AG04449 (cell line): ENCODE measurements at regions of chr3 and their contacts with region 1.

Region 1: DNA sequence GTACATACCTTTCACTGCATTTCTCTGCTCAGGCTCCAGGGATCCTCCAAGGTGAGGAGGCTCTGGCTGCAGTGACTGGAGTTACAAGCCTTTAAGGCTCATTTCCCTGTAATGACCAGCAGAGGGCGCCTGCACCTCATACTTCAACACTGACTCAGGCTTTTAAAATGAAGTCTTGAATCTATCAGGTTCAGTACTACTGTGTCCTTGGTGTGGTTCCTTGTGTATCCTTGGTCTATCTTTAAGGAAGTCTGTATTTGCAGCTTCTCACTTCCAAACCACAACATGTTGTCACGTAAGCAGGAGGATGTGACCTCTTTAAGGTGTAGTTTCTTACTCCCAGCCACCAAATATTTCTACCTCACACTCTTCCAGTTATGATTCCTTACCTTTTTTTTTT is 122.5 kb upstream of the ZBED2 start:
- DNase-seq: peak; percentile 57
- H3K4me3 ChIP-seq: no peak overlapping the region
- CTCF ChIP-seq: peak; percentile 80

Region 2: DNA sequence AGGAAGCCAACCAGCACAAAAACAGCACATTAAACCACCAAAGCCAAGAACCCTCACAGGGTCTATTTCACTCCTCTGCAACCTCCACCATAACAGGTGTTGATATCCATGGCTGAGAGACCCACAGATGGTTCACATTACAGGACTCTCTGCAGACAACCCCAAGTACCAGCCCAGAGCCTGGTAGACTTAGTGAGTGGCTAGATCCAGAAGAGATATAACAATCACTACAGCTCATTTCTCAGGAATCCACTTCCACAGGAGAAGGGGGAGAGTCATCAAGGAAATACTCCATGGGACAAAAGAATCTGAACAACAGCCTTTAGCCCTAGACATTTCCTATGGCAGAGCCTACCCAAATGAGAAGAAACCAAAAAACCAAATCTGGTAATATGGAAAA is 343.7 kb before region 1 on chr3:
- CTCF ChIA-PET with region 1: no interaction called
- POLR2A ChIA-PET with region 1: no interaction called
- DNase-seq: no peak
- H3K4me3 ChIP-seq: no peak overlapping the region
- CTCF ChIP-seq: no peak

Region 3: GRCh38 chr3:111577794-111578685 is 139.6 kb before region 1 on chr3:
- CTCF ChIA-PET with region 1: interaction called, 141 read pairs
- POLR2A ChIA-PET with region 1: no interaction called
- DNase-seq: peak; percentile 70
- H3K4me3 ChIP-seq: no peak overlapping the region
- CTCF ChIP-seq: peak; percentile 71

Region 4: DNA sequence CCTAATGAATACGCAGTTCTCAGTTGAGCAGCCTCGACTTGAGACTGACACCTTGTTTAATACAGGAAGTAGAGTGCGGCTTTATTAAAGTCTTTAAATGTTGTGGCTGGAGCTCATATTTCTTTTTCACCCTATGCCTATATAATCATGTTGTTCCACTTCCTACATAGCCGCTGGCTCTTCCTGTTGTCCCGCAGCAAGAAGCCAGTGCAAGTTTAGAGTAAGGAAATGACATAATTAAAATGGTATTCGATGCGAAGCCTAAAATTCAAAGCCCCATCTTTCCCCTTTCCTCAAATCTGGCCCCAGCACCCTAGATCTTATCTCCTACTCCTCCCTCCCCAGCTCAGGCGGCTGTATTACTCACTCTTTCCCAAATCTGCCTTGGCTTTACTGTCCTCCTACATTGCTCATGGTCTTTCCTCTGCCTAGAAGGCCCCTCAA is 133.9 kb after region 1 on chr3:
- CTCF ChIA-PET with region 1: interaction called, 408 read pairs
- POLR2A ChIA-PET with region 1: no interaction called
- DNase-seq: no peak
- H3K4me3 ChIP-seq: no peak overlapping the region
- CTCF ChIP-seq: no peak

Region 5: DNA sequence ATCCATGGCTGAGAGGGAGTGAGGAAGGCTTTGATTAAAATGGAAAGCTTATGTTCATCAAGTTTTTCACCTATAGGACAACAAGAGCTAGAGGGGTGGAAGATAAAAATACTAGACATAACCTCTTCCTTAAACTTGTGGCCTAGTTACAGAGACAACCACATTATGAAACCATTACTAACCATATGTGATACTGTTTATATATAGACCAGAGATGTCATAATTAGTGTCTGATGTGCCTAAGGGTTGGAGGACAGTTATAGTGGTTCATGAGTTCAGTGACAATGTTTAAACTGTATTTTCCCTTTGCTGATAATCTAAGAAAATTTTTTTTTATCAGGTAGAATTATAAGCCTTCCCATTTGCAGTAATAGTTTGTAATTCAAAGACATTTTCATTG is 165.2 kb after region 1 on chr3:
- CTCF ChIA-PET with region 1: interaction called, 74 read pairs
- POLR2A ChIA-PET with region 1: no interaction called
- DNase-seq: no peak
- H3K4me3 ChIP-seq: no peak overlapping the region
- CTCF ChIP-seq: no peak

Region 6: DNA sequence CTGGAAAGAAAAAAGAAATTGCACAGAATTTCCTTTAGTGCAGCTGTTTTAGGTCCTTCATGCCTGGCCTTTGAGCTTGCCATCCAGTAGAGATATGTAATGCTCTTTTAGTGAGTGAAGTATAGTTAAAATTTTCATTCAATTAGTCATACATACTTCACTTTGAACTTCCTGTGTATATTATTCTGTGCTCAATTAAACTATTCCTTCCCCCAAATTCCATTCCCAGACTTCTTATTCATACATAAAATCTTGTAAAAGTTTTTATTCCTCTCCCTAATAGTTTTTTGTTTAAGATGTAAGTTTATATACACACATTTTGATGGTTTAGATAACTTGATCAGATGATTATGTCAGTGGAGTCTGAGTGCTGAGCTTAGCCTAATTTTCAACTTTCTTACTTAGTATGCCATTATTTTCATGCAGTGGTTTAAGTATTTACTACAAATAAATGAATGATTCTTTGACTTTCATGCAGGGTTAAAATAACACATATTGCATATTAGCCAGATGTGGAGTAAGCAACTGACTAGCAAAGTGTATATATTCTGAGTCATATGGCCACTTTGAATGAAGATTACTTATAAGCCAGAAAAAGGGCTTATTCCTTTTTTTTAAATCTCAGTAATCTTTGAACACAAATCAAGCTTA is 218.7 kb after region 1 on chr3:
- CTCF ChIA-PET with region 1: interaction called, 72 read pairs
- POLR2A ChIA-PET with region 1: no interaction called
- DNase-seq: peak; percentile 73
- H3K4me3 ChIP-seq: no peak overlapping the region
- CTCF ChIP-seq: no peak

Region 7: DNA sequence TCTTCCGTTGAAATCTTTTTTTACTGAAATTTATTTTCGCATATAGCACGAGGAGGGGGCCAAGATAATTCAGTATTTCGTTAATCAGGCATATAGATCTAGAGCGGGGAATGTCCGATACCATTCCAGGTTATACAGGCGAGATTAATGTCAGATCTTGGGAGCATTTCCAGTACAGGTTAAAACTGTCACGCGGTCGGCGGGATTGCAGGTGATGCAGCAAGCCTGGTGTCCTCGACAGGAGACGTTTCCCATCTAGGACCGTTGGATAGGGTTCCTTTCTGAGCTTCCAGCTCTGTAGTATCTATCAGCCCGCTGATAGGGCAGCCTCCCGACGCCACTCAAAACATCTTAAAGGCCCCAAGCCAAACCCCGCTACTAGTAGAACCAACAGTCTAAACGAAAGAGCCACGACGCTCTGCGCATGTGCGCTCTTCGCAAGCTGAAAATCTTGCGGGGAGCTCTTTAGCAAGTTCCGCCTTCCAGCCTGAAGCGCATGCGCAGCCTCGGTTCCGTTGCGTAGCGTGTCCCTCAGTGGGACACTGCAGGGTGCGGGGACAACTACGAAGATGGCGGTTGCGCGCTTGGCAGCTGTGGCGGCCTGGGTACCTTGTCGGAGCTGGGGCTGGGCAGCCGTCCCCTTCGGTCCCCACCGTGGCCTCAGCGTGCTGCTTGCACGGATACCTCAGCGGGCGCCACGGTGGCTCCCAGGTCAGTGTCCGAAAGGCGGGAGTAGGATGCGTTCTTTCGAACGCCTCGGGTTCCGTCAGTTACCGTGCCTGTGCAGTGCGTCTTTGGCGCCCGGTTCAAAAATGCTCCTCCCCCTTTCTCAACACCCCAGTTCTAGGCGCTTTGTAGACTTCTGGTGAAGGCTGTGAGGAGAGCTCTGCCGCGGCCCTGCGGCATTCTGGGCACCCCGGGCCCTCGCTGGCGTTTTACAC is 261.2 kb after region 1 on chr3 and contains the start of gene ABHD10:
- CTCF ChIA-PET with region 1: interaction called, 324 read pairs
- POLR2A ChIA-PET with region 1: no interaction called
- DNase-seq: peak; percentile 84
- H3K4me3 ChIP-seq: peak within 1 kb of the TSS; percentile 89
- CTCF ChIP-seq: no peak

Region 8: DNA sequence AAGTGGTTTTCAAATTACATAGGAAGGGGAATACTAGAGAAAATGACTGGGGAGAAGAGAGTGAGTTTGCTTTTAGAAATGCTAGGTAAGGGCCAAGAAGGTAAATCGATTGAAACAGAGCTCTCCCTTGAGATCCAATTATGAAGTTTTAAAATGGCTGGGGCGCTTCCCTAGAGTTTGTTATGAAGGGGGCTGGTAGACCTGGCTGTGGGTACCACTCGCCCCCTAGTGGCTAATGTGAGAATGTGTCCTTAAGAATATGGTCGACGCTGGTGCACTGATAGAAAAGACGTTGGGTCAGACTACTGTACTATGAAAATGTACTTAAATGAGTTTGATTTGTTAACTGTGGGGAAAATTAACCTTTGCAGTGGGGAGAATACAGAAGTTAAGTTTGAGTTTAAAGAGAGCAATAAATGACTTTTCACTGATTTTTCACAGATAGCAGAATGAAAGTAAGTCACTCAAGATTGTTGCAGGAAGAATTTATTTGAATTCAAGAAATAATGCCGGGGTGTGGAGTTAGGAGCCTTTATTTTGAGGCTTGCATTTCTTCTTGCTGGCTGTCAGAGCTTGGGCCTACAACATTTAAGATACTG is 326.1 kb after region 1 on chr3:
- CTCF ChIA-PET with region 1: interaction called, 25 read pairs
- POLR2A ChIA-PET with region 1: no interaction called
- DNase-seq: no peak
- H3K4me3 ChIP-seq: no peak overlapping the region
- CTCF ChIP-seq: peak; percentile 75